CD4-positive, alpha-beta T cell (primary cell): ENCODE measurements at regions of chr18 and their contacts with region 1.

Region 1: GRCh38 chr18:23291456-23292205 is 156.3 kb downstream of the CABLES1 start:
- DNase-seq: no peak
- ATAC-seq: no peak
- H3K4me3 ChIP-seq: no peak overlapping the region
- H3K4me3 Mint-ChIP-seq: no peak overlapping the region
- H3K27ac ChIP-seq: no peak overlapping the region
- H3K27ac Mint-ChIP-seq: no peak overlapping the region
- H3K4me1 ChIP-seq: no peaks in the 10 kb centered on the region
- H3K4me1 Mint-ChIP-seq: no peaks in the 10 kb centered on the region
- H3K27me3 ChIP-seq: no peaks in the 10 kb centered on the region
- H3K27me3 Mint-ChIP-seq: no peaks in the 10 kb centered on the region
- CTCF ChIP-seq: no peak

Region 2: GRCh38 chr18:23311351-23312121 is 19.9 kb after region 1 on chr18:
- CTCF ChIA-PET with region 1: no interaction called
- POLR2A ChIA-PET with region 1: no interaction called
- intact Hi-C with region 1: loop called in 1 of 2 experiments (anchors 2 kb)
- DNase-seq: no peak
- ATAC-seq: no peak
- H3K4me3 ChIP-seq: no peak overlapping the region
- H3K4me3 Mint-ChIP-seq: no peak overlapping the region
- H3K27ac ChIP-seq: no peak overlapping the region
- H3K27ac Mint-ChIP-seq: no peak overlapping the region
- H3K4me1 ChIP-seq: peaks cover 15% of the 10 kb centered on the region
- H3K4me1 Mint-ChIP-seq: peaks cover 18% of the 10 kb centered on the region
- H3K27me3 ChIP-seq: no peaks in the 10 kb centered on the region
- H3K27me3 Mint-ChIP-seq: no peaks in the 10 kb centered on the region
- CTCF ChIP-seq: no peak

Region 3: GRCh38 chr18:23756590-23757436 is 465.2 kb after region 1 on chr18:
- CTCF ChIA-PET with region 1: no interaction called
- POLR2A ChIA-PET with region 1: no interaction called
- intact Hi-C with region 1: no loop called
- DNase-seq: no peak
- ATAC-seq: no peak
- H3K4me3 ChIP-seq: no peak overlapping the region
- H3K4me3 Mint-ChIP-seq: no peak overlapping the region
- H3K27ac ChIP-seq: no peak overlapping the region
- H3K27ac Mint-ChIP-seq: no peak overlapping the region
- H3K4me1 ChIP-seq: peaks cover 2% of the 10 kb centered on the region
- H3K4me1 Mint-ChIP-seq: no peaks in the 10 kb centered on the region
- H3K27me3 ChIP-seq: no peaks in the 10 kb centered on the region
- H3K27me3 Mint-ChIP-seq: no peaks in the 10 kb centered on the region
- CTCF ChIP-seq: no peak